Vagina (tissue), 2 donors: ENCODE measurements at regions of chr5 and their contacts with region 1.

Region 1: GRCh38 chr5:159456722-159457465 is 126.6 kb upstream of the IL12B start:
- DNase-seq: peak; percentile 49 to 77
- H3K4me3 ChIP-seq: no peak overlapping the region
- H3K27ac ChIP-seq: no peak overlapping the region
- H3K4me1 ChIP-seq: no peaks in the 10 kb centered on the region
- H3K27me3 ChIP-seq: no peaks in the 10 kb centered on the region
- CTCF ChIP-seq: no peak
- POLR2A ChIP-seq: no peak

Region 2: GRCh38 chr5:159764283-159765134 is 307.6 kb after region 1 on chr5:
- intact Hi-C with region 1: loop called (anchors 10 kb)
- DNase-seq: no peak
- H3K4me3 ChIP-seq: no peak overlapping the region
- H3K27ac ChIP-seq: no peak overlapping the region
- H3K4me1 ChIP-seq: no peaks in the 10 kb centered on the region
- H3K27me3 ChIP-seq: no peaks in the 10 kb centered on the region
- CTCF ChIP-seq: no peak
- POLR2A ChIP-seq: no peak